ENCODE measurements at regions of chr9 and their contacts with region 1.

Region 1: DNA sequence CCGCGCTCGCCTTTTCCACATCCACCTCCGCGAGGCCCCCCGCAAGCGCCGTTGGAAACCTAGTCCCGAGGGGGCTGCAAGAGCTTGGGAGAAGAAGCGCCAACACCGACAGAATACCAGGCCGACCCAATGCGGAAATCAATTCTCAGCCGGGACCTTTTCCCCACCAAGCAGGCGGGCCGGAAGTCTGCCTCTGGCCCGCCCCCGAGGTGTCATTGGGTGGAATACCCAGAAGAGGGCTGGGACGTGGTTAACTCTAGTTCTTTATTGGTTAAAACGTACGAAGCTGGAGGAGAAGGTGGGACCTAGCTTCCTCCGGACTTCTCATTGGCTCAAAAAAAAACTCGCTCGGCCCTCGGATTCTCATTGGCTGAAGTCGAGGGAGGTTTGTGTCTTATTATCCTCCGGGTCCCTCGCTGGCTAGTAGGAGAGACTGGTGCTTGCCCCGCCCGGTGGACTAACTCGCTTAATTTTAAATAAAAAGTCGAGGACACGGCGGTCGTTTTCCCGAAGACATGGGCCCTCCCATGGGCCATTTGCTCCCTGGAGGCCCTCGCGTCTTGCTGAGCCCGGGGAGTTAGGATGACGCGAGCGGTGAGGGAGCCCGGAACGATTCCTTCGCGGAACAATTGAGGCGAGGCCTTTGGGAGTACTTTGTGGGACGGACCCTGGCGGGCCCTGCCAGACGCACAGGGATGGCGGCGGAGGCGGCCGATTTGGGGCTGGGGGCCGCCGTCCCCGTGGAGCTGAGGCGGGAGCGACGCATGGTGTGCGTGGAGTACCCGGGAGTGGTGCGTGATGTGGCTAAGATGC is at the start of gene GTF3C5:
- DNase-seq: peak; percentile 90 to 94
- H3K4me3 ChIP-seq: peak within 1 kb of the TSS; percentile 83 to 99 (median 97)
- H3K27ac ChIP-seq: peak within 1 kb of the TSS; percentile 55 to 84 (median 73)
- H3K4me1 ChIP-seq: peaks cover 20 to 26% of the 10 kb centered on the region in 2 donors
- H3K27me3 ChIP-seq: no peaks in the 10 kb centered on the region
- CTCF ChIP-seq: peak in 1 of 6 experiments; percentile 18
- POLR2A ChIP-seq: peak in 1 of 2 donors; percentile 58
- total RNA-seq, gene GTF3C5: 49.3 to 69.0 (median 56.8) TPM

Region 2: DNA sequence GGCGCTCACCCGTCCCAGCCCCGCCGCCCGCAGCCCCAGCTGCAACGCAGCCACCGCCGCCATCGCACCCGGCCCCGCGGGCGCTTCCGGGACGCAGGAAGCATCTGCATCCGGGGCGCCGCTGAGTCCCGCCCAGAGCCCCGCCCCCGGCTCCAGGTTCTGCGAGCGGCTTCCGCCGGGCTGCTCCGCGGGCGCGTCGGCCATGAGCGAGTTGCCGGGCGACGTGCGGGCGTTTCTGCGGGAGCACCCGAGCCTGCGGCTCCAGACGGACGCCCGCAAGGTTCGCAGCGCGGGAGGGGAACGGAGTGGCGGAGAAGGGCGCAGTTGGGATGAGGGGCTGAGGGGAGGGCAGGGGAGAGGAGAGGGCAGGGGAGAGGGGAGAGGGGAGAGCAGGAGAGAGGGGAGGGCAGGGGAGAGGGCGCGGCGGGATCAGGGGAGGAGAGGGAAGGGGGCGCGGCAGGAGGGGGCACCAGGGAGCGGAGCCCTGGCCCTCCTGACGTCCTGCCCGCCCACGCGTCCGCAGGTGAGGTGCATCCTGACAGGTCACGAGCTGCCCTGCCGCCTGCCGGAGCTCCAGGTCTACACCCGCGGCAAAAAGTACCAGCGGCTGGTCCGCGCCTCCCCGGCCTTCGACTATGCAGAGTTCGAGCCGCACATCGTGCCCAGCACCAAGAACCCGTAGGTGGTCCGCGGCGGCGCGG is 326.0 kb after region 1 on chr9 and contains the starts of genes SURF1 and SURF2:
- intact Hi-C with region 1: loop called (anchors 10 kb)
- DNase-seq: peak; percentile 90 to 92
- H3K4me3 ChIP-seq: peak within 1 kb of the TSS; percentile 69 to 82 (median 74)
- H3K27ac ChIP-seq: peak within 1 kb of the TSS in 2 of 3 donors; percentile 38 to 63
- H3K4me1 ChIP-seq: peaks cover 17 to 22% of the 10 kb centered on the region in 2 donors
- H3K27me3 ChIP-seq: no peaks in the 10 kb centered on the region
- CTCF ChIP-seq: peak in 3 of 6 experiments; percentile 12 to 19 (median 14)
- POLR2A ChIP-seq: peak in 1 of 2 donors; percentile 63
- total RNA-seq, gene SURF1: 51.5 to 82.7 (median 64.7) TPM
- total RNA-seq, gene SURF2: 26.2 to 42.7 (median 31.6) TPM

Measured in thyroid gland (tissue), 4 donors.